Activated naive CD4-positive, alpha-beta T cell treated with anti-CD3 and anti-CD28 coated beads for 36 hours (primary cell): ENCODE measurements at regions of chr5 and their contacts with region 1.

Region 1: DNA sequence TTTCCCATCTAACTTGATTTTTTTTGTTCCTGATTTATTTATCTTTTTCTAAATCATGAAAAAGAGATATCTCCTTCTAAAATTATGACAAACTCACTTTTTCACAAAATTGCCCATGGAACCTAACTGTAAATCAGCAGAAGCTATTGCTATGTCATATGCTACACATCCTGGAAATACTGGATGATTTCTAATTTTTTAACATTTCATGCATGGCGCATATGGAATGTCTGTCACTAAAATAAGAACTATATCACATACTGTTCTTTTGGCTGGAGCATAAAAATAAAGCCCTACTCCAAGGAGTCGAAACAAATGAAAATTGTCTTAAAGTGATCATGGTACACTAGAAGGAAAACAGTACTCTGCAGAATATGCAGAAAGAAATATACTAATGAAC is 60.6 kb downstream of the CAMK4 start:
- DNase-seq: no peak
- H3K4me3 Mint-ChIP-seq: no peak overlapping the region
- H3K27ac Mint-ChIP-seq: no peak overlapping the region
- H3K4me1 Mint-ChIP-seq: peaks cover 71% of the 10 kb centered on the region
- H3K27me3 Mint-ChIP-seq: no peaks in the 10 kb centered on the region

Region 2: GRCh38 chr5:111486055-111486454 is 201.2 kb after region 1 on chr5:
- CTCF ChIA-PET with region 1: no interaction called
- intact Hi-C with region 1: loop called (anchors 5 kb)
- DNase-seq: no peak
- H3K4me3 Mint-ChIP-seq: no peak overlapping the region
- H3K27ac Mint-ChIP-seq: peak overlapping the region; percentile 41
- H3K4me1 Mint-ChIP-seq: peaks cover 9% of the 10 kb centered on the region
- H3K27me3 Mint-ChIP-seq: no peaks in the 10 kb centered on the region